ENCODE measurements at regions of chr13 and their contacts with region 1.

Region 1: DNA sequence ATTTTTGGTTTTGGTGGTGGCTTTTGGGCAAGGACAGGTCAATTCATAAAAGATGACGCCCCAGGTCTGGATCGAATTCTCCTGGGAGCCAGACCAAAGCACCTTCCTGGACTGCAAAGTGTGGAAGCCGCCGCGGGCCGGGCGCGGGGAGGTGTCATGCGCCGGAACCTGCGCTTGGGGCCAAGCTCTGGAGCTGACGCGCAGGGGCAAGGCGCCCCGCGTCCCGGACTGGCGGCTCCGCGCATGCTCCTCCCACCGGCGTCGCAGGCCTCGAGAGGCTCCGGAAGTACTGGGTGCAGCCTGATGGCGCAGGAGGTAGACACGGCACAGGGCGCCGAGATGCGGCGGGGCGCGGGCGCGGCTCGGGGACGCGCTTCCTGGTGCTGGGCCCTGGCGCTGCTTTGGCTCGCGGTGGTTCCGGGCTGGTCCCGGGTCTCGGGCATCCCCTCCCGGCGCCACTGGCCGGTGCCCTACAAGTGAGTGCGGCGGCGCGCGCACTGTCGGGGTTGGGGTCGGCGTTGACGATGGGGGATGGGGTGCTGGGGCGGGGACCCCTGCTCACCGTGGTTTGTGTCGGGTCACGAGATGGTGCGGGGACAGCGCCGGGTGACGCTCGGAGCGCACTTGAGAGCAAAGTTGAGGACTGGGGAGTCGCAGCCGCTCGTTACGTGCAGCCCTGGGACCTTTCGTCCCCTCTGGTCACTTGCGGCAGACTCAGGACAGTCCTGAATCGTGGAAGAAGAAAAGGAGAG is at the start of gene CLN5:
- DNase-seq: peak; percentile 96
- H3K4me3 Mint-ChIP-seq: peak within 1 kb of the TSS; percentile 96
- H3K27ac Mint-ChIP-seq: peak within 1 kb of the TSS; percentile 100
- H3K4me1 Mint-ChIP-seq: peaks cover 37% of the 10 kb centered on the region
- H3K27me3 Mint-ChIP-seq: peaks cover 21% of the 10 kb centered on the region
- total RNA-seq, gene CLN5: 13.0 to 15.6 TPM

Region 2: DNA sequence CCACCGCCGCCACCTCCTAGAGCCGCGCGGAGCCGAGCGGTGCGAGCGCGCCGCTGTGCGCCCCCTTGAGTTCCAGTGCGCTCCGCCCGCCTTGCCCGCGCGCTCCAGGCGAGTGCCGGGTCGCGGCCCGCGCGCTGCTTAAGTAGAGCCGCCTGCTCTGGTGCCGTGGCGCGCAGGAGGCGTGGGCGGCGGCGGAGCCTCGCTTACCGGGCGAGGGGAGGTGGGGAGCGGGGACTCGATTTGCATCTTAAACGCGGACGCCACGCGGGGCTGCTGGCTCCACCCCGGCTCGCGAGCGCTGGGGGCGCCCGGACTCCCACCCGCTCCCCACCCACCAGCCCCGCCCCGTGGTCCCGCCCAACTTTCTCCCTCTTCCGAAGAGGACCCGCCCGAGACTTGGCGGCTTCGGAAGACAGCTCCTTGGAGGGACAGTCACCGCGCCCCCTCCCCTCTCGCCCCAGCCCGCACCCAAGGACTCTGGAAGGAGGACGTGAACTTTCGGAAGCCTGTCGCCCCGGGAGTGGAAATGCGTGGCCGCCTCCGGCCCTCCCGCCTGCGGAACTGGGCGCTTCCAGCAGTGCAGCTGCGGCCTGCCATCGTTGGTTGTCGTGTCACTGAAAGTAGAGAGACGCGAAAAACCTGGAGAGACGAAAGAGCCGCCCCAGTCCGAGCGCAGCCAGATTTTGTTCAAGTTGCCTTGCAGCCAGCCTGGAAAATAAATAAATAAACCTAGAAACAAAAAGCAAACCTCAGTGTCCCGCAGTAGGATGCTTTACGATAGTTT is 105.5 kb before region 1 on chr13 and contains the start of gene KCTD12:
- CTCF ChIA-PET with region 1: interaction called, 10 read pairs
- POLR2A ChIA-PET with region 1: interaction called, 46 read pairs
- DNase-seq: peak; percentile 72
- H3K4me3 Mint-ChIP-seq: peak within 1 kb of the TSS; percentile 84
- H3K27ac Mint-ChIP-seq: peak within 1 kb of the TSS; percentile 71
- H3K4me1 Mint-ChIP-seq: peaks cover 31% of the 10 kb centered on the region
- H3K27me3 Mint-ChIP-seq: peaks cover 38% of the 10 kb centered on the region
- total RNA-seq, gene KCTD12: 7.1 to 7.3 TPM

Region 3: DNA sequence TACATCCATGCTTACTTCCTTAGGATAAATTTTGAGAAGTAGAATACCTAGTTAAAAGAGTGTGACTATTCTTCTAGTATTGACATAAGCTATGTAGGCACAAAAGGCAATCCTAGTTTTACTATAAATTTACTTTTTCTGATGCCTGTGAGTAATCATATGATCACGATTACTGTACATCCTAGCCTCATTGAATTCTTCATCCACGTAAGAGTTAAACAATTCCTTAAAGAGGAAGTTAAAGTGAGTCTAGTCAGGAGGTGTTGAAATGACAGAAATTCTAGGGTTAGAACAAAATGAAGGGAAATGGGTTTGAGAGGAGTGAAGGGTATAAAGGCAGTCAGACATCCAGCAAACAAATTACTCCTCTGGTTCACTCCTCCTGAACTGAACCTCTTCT is 43.8 kb before region 1 on chr13 and contains the start of gene ACOD1:
- CTCF ChIA-PET with region 1: no interaction called
- POLR2A ChIA-PET with region 1: no interaction called
- DNase-seq: no peak
- H3K4me3 Mint-ChIP-seq: no peak within 1 kb of the TSS
- H3K27ac Mint-ChIP-seq: no peak within 1 kb of the TSS
- H3K4me1 Mint-ChIP-seq: no peaks in the 10 kb centered on the region
- H3K27me3 Mint-ChIP-seq: peaks cover 14% of the 10 kb centered on the region
- total RNA-seq, gene ACOD1: not detected

Region 4: GRCh38 chr13:76980075-76980718 is 11.8 kb before region 1 on chr13:
- CTCF ChIA-PET with region 1: interaction called, 38 read pairs
- POLR2A ChIA-PET with region 1: interaction called, 10 read pairs
- DNase-seq: peak; percentile 82
- H3K4me3 Mint-ChIP-seq: no peak overlapping the region
- H3K27ac Mint-ChIP-seq: no peak overlapping the region
- H3K4me1 Mint-ChIP-seq: peaks cover 13% of the 10 kb centered on the region
- H3K27me3 Mint-ChIP-seq: peaks cover 50% of the 10 kb centered on the region

Region 5: GRCh38 chr13:77002590-77003190 is 10.7 kb after region 1 on chr13:
- CTCF ChIA-PET with region 1: interaction called, 12 read pairs
- POLR2A ChIA-PET with region 1: interaction called, 35 read pairs
- DNase-seq: no peak
- H3K4me3 Mint-ChIP-seq: no peak overlapping the region
- H3K27ac Mint-ChIP-seq: no peak overlapping the region
- H3K4me1 Mint-ChIP-seq: peaks cover 19% of the 10 kb centered on the region
- H3K27me3 Mint-ChIP-seq: no peaks in the 10 kb centered on the region

Region 6: DNA sequence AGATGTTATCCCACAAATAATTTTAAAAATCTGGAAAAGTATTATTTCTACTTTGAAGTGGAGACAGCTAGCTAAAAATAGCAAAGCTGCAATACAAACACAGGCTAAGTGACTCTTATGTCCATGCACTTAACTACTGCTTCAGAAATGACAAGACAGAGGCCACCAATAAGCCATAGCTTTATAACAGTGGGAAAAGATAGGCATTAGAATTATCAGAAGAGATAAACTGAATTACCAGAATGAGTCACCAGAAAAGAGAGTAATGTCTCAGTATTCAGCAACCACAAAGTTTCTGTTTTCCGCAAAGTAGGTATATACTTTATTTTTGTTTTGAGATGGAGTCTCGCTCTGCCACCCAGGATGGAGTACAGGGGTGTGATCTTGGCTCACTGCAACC is 17.0 kb after region 1 on chr13:
- CTCF ChIA-PET with region 1: interaction called, 3 read pairs
- POLR2A ChIA-PET with region 1: interaction called, 29 read pairs
- DNase-seq: no peak
- H3K4me3 Mint-ChIP-seq: no peak overlapping the region
- H3K27ac Mint-ChIP-seq: no peak overlapping the region
- H3K4me1 Mint-ChIP-seq: peaks cover 27% of the 10 kb centered on the region
- H3K27me3 Mint-ChIP-seq: no peaks in the 10 kb centered on the region

Region 7: DNA sequence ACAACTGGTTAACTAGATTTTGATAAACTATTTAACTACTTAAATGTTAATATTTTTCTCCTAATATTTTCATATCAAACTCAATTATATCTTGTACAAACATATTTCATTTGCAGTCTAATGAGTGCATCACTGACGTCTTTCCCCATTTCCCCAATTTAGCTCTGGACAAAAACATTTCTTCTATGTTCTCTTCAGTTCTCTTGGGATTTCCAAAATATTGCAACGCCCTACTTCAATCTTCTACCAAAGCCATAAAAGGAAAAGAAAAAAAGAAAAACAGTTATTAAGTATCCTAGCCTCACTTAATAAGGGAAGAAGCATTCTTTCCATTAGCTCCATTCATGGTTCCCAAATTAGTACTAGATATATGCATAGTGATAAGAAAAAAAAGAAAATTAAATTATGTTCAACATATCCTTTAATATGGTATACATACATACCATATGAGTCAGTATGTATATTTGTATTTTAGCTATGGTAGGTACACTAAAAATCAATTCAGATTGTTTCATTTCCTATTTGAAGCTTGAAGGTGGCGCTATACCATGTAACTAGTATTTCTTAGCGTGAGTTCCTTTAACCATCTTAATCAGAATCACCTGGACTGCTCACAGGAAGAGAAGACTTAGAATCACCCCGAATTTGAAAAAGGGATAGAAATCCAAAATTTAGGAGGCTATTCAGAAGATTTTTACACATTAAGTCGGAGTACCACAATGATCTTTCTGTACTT is 25.1 kb after region 1 on chr13:
- CTCF ChIA-PET with region 1: interaction called, 4 read pairs
- POLR2A ChIA-PET with region 1: interaction called, 20 read pairs
- DNase-seq: no peak
- H3K4me3 Mint-ChIP-seq: no peak overlapping the region
- H3K27ac Mint-ChIP-seq: no peak overlapping the region
- H3K4me1 Mint-ChIP-seq: peaks cover 31% of the 10 kb centered on the region
- H3K27me3 Mint-ChIP-seq: no peaks in the 10 kb centered on the region

Region 8: DNA sequence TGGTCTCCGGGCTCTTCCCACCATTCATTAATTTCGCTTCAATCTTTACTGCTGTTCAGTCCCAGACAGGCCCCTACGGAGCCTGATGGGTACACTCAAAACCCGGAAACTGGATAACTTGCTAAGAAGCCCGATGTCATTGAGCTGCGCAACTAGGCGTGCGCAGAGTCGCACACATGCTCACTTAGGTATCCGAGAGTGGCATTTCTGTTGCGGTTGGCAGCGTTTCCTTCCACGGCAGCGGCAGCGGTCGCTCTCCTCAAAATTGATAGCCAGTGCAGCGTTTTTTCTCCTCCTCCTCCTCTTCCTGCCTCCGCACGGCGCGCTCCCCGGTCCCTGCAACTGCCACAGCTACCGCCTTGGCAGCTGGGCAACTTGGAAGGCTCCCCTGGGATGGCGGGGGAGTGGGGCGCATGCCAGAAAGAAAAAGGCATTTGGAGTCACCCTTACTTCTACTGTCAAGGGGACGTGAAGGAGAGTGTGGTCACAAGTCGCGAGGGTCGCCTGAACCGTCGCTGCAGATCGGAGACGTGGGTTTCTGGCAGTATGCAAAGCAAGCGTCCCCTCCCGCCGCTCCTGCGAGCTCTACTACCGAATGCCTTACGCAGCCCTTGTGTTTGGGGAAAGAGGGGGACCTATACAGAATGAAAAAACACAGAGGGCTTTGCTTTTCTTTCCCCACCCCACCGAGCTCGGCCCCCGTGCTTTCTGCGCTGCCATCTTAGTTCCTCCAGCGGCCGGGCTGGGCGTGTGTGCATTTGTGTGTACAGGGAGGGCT is 337.4 kb after region 1 on chr13:
- CTCF ChIA-PET with region 1: interaction called, 5 read pairs
- POLR2A ChIA-PET with region 1: interaction called, 33 read pairs
- DNase-seq: peak; percentile 95
- H3K4me3 Mint-ChIP-seq: peak overlapping the region; percentile 95
- H3K27ac Mint-ChIP-seq: peak overlapping the region; percentile 99
- H3K4me1 Mint-ChIP-seq: peaks cover 40% of the 10 kb centered on the region
- H3K27me3 Mint-ChIP-seq: no peaks in the 10 kb centered on the region

Measured in activated CD4-positive, alpha-beta memory T cell treated with anti-CD3 and anti-CD28 coated beads, Interleukin-2, amount 10 ng/mL, durations not matched to agents 7 days and 5 days (primary cell).